ENCODE measurements at regions of chr7 and their contacts with region 1.

Region 1: DNA sequence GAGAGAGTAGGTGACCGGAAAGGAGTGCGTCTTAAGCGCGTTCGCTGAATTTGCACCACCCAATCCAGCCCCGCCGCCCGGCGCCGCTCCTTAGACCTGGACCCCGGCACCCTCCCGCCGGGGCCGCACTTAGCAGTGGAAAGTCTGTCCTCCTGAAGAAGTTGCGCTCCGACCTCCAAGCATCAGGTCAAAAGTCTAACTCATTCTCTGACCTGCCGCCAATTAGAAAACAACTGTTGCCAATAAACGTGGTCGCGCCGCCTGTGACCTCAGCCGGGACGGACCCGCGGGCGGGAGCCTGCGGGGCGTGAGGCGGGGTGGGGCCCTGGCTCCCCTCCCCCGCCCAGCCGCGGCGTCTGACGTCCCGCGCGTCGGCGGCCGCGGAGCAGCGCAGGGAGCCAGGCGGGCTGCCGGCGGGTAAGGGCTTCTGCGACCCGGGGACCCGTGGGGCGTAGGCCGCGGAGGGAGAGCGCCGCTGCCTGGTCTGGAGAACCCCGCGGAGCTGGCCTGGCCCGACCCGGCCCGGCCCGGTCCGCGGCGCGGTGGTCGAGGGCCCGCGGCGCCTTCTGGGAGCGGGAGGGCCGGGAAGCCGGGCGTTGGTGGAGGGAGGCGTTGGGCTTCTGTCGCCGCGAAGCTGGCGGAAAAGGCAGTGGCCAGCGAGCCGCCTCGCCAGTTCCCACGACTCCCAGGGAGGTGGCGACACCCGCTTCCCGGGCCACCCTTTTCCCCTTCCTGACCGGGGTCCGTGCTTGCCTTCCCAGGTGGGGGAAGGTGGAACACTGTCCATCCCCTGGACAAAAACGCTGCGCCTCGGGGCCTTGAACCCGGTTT is at the start of gene BCAP29:
- DNase-seq: peak; percentile 65
- H3K4me3 ChIP-seq: peak within 1 kb of the TSS; percentile 68 to 88 (median 82)
- H3K27ac ChIP-seq: peak within 1 kb of the TSS; percentile 75
- H3K4me1 ChIP-seq: peaks cover 9% of the 10 kb centered on the region
- H3K27me3 ChIP-seq: no peaks in the 10 kb centered on the region
- CTCF ChIP-seq: peak in 1 of 2 donors; percentile 38
- total RNA-seq, gene BCAP29: 92.1 to 129 TPM

Region 2: DNA sequence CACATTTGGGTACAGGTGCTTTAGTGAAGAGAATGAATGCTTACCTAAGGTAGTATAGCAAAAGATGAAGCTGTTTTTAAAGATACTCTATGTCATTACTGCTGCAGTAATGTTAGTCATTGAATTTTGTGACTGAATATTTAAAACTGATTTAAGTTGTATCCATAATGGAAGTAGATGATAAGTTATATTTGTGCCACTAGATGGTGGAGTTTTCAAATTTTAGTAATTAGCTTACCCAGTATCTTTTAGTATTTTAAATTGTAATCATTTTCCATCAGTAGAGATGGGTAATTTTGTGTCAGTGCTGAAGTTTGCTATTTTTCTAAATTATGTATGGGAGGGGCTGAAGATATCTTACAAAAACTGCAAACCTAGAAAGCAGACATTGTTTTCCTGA is 386.1 kb before region 1 on chr7:
- CTCF ChIA-PET with region 1: no interaction called
- dilution Hi-C with region 1: no loop called
- in situ Hi-C with region 1: no loop called
- intact Hi-C with region 1: loop called (anchors 10 kb)
- DNase-seq: no peak
- H3K4me3 ChIP-seq: no peak overlapping the region
- H3K27ac ChIP-seq: no peak overlapping the region
- H3K4me1 ChIP-seq: no peaks in the 10 kb centered on the region
- H3K27me3 ChIP-seq: no peaks in the 10 kb centered on the region
- CTCF ChIP-seq: no peak

Region 3: GRCh38 chr7:107594961-107595737 is 15.0 kb after region 1 on chr7:
- CTCF ChIA-PET with region 1: no interaction called
- dilution Hi-C with region 1: no loop called
- in situ Hi-C with region 1: no loop called
- intact Hi-C with region 1: no loop called
- DNase-seq: peak; percentile 97
- H3K4me3 ChIP-seq: no peak overlapping the region
- H3K27ac ChIP-seq: peak overlapping the region; percentile 82
- H3K4me1 ChIP-seq: peaks cover 42% of the 10 kb centered on the region
- H3K27me3 ChIP-seq: no peaks in the 10 kb centered on the region
- CTCF ChIP-seq: no peak

Region 4: DNA sequence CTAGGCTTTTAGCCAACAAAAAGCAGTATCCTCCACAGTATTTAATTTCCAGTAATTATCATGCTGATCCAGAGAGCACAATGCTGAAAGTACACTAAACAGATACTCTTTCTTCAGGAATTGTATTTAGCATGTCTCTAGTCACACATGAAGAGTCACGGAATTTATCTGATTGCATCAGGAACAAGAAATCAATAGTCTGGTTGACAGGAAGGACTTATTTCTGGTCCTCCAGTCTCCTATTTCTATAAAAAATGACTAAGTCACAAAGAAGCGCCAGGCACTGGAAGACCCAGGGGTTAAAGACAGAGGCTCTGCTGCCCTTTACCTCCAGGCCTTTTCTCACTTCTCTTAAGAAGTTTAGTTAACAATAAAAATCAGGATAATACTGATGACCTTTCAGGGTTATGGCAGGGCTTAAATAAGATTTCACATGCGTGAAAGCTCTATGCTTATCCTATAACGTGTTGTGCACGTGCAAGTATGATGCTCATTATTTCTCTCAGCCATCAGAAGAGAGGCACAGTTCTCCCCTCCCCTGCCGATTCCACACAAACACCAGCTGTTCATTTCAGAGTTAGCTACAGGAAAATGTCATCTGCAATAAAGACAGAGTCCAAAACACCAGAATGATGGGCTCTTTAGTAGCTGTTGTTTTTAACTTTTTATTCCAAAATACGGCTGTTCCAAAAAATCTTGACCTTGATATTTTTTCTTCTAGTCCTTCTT is 117.4 kb after region 1 on chr7:
- CTCF ChIA-PET with region 1: no interaction called
- dilution Hi-C with region 1: no loop called
- in situ Hi-C with region 1: no loop called
- intact Hi-C with region 1: no loop called
- DNase-seq: no peak
- H3K4me3 ChIP-seq: no peak overlapping the region
- H3K27ac ChIP-seq: no peak overlapping the region
- H3K4me1 ChIP-seq: peaks cover 8% of the 10 kb centered on the region
- H3K27me3 ChIP-seq: no peaks in the 10 kb centered on the region
- CTCF ChIP-seq: no peak

Measured in mammary epithelial cell (primary cell).